CD8-positive, alpha-beta T cell (primary cell): ENCODE measurements at regions of chr1 and their contacts with region 1.

Region 1: GRCh38 chr1:71885171-71885570 is 397.2 kb downstream of the NEGR1 start:
- DNase-seq: no peak
- ATAC-seq: no peak
- H3K4me3 ChIP-seq: no peak overlapping the region
- H3K4me3 Mint-ChIP-seq: no peak overlapping the region
- H3K27ac ChIP-seq: no peak overlapping the region
- H3K27ac Mint-ChIP-seq: no peak overlapping the region
- H3K4me1 ChIP-seq: no peaks in the 10 kb centered on the region
- H3K4me1 Mint-ChIP-seq: no peaks in the 10 kb centered on the region
- H3K27me3 ChIP-seq: no peaks in the 10 kb centered on the region
- H3K27me3 Mint-ChIP-seq: no peaks in the 10 kb centered on the region
- CTCF ChIP-seq: no peak

Region 2: DNA sequence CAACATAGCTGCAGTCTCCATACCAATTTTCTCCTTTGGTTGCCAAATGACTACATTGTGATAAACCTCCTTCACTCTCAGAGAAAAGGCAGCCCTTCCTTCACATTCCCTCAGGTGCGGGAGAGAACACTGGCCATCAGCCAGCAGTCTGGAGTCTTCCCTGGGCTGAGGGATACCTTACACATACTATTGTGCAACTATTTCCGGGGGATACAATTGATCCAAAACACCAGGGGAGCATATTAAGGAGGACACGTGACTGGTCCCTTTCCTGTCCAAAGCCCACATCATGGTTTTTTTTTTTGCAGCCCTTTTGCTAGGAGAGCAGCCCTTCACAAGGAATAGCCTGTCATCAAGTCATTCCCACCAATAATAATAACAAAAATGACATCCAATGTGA is 632.3 kb before region 1 on chr1:
- CTCF ChIA-PET with region 1: no interaction called
- POLR2A ChIA-PET with region 1: no interaction called
- intact Hi-C with region 1: no loop called
- DNase-seq: no peak
- ATAC-seq: no peak
- H3K4me3 ChIP-seq: no peak overlapping the region
- H3K4me3 Mint-ChIP-seq: no peak overlapping the region
- H3K27ac ChIP-seq: no peak overlapping the region
- H3K27ac Mint-ChIP-seq: no peak overlapping the region
- H3K4me1 ChIP-seq: no peaks in the 10 kb centered on the region
- H3K4me1 Mint-ChIP-seq: no peaks in the 10 kb centered on the region
- H3K27me3 ChIP-seq: no peaks in the 10 kb centered on the region
- H3K27me3 Mint-ChIP-seq: no peaks in the 10 kb centered on the region
- CTCF ChIP-seq: no peak

Region 3: GRCh38 chr1:71843012-71843411 is 42.2 kb before region 1 on chr1:
- CTCF ChIA-PET with region 1: no interaction called
- POLR2A ChIA-PET with region 1: no interaction called
- intact Hi-C with region 1: loop called in 1 of 2 experiments (anchors 2 kb)
- DNase-seq: no peak
- ATAC-seq: no peak
- H3K4me3 ChIP-seq: no peak overlapping the region
- H3K4me3 Mint-ChIP-seq: no peak overlapping the region
- H3K27ac ChIP-seq: no peak overlapping the region
- H3K27ac Mint-ChIP-seq: no peak overlapping the region
- H3K4me1 ChIP-seq: no peaks in the 10 kb centered on the region
- H3K4me1 Mint-ChIP-seq: no peaks in the 10 kb centered on the region
- H3K27me3 ChIP-seq: no peaks in the 10 kb centered on the region
- H3K27me3 Mint-ChIP-seq: no peaks in the 10 kb centered on the region
- CTCF ChIP-seq: no peak